ENCODE measurements at regions of chr14 and their contacts with region 1.

Region 1: DNA sequence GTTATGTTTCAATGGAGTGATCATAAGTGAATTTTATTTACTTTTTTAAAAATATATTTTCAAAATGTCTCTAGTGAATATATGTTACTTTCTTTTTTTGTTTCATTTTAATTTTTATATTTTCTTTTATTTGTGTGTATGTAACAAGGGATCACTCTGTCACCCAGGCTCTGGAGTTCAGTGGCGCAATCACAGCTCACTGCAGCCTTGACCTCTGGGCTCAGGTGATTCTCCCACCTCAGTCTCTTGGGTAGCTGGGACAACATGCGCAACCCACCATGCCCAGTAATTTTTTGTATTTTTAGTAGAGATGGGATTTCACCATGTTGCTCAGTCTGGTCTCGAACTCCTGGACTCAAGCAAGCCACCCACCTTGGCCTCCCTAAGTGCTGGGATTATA is 18.1 kb downstream of the TMEM253 start:
- DNase-seq: no peak
- H3K4me3 ChIP-seq: no peak overlapping the region
- H3K27ac ChIP-seq: no peak overlapping the region
- H3K4me1 ChIP-seq: no peaks in the 10 kb centered on the region
- CTCF ChIP-seq: no peak

Region 2: GRCh38 chr14:20934148-20934762 is 184.7 kb before region 1 on chr14:
- CTCF ChIA-PET with region 1: no interaction called
- POLR2A ChIA-PET with region 1: no interaction called
- intact Hi-C with region 1: no loop called
- DNase-seq: peak; percentile 44
- H3K4me3 ChIP-seq: no peak overlapping the region
- H3K27ac ChIP-seq: no peak overlapping the region
- H3K4me1 ChIP-seq: no peaks in the 10 kb centered on the region
- CTCF ChIP-seq: peak; percentile 84

Region 3: DNA sequence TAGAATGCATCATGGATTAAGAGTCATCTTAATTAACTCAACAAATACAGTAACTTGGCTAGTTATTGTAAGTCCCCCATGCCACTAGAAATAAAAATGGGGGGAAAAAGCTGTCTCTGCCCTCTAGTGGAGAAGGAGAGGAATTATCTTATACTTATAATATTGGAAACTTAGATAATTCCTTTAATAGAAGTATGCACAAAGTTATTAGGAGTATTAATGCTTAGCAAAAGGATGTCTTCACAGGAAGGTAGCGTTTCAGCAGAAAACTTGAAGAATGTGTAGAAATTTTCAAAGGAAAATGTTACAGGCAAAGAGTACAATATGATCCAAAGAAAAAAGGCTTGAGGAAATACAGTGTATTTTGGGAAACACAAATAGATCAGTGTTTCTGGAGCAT is 17.1 kb after region 1 on chr14:
- CTCF ChIA-PET with region 1: no interaction called
- POLR2A ChIA-PET with region 1: interaction called, 11 read pairs
- intact Hi-C with region 1: no loop called
- DNase-seq: peak; percentile 50
- H3K4me3 ChIP-seq: no peak overlapping the region
- H3K27ac ChIP-seq: no peak overlapping the region
- H3K4me1 ChIP-seq: no peaks in the 10 kb centered on the region
- CTCF ChIP-seq: peak; percentile 95